Ascending aorta (tissue), 2 donors: ENCODE measurements at regions of chr19 and their contacts with region 1.

Region 1: DNA sequence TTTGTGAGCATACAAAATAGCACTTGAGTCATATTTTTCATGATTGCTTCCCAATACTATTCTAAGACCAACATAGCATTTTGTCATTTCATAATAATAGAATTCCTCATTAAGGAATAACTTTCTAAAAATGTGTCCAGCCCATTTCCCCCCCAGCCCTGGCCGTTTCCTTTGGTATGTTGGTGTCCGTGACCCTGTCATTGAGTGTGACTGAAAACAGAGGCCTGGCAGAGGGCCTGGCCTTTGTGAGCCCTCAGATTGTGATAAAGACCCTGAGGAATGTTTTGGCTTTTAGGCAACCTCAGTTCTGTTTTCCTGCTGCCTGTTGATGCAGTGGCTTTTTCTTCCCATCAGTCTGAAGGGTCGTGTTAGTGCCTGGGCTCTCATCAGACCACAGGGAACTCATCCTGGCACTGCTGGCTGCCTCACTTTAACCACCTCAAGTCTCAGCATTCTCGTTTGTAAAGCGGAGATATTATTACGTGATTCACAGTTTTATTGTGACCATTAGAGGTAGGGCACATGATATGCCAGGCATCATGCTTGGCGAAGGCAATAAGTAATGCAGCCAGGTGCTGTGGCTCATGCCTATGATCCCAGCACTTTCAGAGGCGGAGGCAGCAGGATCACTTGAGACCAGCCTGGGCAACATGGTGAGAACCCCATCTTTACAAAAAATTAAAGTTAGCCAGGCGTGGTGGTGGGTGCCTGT is 13.8 kb downstream of the SPINT2 start:
- DNase-seq: peak; percentile 33 to 95
- H3K4me3 ChIP-seq: peak overlapping the region in 1 of 2 donors; percentile 27
- H3K27ac ChIP-seq: peak overlapping the region; percentile 85 to 89
- H3K4me1 ChIP-seq: peaks cover 26 to 69% of the 10 kb centered on the region in 2 donors
- H3K27me3 ChIP-seq: no peaks in the 10 kb centered on the region
- CTCF ChIP-seq: no peak

Region 2: DNA sequence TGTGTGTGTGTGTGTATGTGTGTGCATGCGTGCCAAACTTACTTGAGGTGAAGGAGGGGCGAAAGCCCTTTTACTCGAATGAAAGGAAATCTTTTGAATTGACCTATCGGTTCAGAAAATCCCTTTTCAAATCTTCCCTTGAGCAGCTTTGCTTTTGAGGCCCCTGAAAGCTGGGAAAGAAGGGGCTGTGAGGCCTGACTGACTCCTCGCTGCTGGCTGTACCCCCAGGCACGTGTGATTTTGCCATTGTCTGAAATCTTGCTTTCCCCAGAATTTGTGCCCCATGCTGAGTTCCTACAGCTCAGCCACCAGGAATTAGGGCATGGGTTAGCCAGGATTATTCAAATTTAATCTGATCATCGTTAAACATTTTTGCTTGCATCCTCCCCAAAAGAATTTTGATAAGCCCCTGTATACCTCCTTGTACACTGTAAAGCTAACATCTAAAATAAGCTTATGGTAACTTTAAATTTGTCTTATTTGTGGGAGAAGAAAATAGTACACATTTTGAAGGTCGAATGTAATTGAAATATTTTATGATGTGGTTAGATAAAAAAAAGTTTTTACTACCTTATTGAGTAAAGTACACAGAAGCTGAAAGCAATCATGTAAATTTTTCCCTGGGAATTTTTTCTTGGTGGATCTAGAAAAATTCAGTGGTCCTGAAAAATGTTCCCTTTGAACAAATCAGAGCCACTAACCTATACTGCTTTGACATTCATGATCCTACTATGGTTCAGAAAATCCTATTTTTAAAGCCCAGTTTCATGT is 324.4 kb before region 1 on chr19:
- intact Hi-C with region 1: no loop called
- DNase-seq: peak in 1 of 2 donors; percentile 19
- H3K4me3 ChIP-seq: no peak overlapping the region
- H3K27ac ChIP-seq: no peak overlapping the region
- H3K4me1 ChIP-seq: no peaks in the 10 kb centered on the region
- H3K27me3 ChIP-seq: no peaks in the 10 kb centered on the region
- CTCF ChIP-seq: no peak

Region 3: DNA sequence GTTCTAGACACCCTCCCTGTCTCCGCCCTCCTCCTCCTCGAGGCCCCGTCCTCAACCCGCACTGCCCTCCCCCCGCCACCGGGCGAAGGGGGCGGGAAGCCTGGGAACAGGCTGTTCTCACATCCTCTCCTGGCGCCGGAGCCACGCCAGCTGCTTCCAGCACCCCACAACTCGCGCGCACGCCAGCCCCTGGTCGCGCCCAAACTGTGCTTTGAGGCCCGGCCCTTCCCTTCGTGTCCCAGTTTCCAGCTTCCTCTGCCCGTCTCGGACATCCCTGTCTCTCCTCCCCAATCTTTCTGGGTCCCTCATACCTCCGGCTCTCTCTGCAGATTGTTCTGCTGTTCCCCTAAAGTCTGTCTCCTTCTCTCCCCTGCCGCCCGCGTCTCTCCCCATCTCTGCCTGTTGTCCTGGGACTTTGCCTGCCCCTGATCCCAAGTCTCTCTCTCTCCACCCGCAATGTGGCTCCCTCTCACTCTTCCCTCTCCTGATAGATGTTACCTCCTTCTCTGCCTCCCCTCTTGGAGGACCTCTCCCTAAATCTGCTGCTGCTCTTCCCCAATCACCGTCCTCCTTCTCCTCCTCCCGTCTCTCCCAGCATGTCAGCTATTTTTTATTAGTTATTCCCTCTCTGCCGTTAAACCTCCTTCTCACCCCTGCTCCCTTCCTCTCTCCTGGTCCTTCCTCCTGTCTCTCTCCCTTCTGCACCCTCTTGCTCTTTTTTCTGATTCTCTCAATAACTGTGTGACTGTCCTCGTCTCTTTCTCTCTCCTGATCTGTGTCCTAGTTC is 68.3 kb before region 1 on chr19:
- intact Hi-C with region 1: no loop called
- DNase-seq: peak; percentile 69 to 82
- H3K4me3 ChIP-seq: peak overlapping the region; percentile 36 to 55
- H3K27ac ChIP-seq: peak overlapping the region; percentile 51 to 79
- H3K4me1 ChIP-seq: peaks cover 10 to 24% of the 10 kb centered on the region in 2 donors
- H3K27me3 ChIP-seq: no peaks in the 10 kb centered on the region
- CTCF ChIP-seq: no peak

Region 4: DNA sequence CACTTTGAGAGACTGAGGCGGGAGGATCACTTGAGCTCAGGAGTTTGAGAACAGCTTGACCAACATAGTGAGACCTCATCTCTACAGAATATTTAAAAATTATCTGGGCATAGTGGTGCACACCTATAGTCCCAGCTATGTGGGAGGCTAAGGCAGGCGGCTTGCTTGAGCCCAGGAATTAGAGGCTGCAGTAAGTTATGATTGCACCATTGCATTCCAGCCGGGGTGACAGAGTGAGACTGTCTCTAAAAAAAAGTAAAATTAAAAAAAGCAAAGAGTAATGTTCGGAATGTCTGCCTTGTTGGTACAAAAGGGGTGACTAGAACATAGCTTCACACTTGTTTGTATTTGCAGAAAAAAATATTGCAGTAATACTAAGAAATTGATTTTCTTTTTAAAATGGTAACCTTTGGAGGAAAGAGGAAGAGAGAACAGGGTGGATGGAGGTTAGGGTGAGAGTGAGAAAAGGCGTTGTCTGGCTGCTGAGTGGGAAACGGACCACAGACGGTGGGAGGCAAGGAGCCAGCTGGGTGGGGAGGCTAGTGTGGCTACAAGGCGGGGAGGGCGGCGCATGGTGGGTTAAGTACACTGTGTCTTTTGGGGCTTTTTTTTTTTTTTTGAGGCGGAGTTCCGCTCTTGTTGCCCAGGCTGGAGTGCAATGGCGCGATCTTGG is 32.2 kb before region 1 on chr19:
- intact Hi-C with region 1: loop called (anchors 1 kb)
- DNase-seq: peak in 1 of 2 donors; percentile 87
- H3K4me3 ChIP-seq: peak overlapping the region in 1 of 2 donors; percentile 6
- H3K27ac ChIP-seq: peak overlapping the region; percentile 90 to 99
- H3K4me1 ChIP-seq: peaks cover 18 to 63% of the 10 kb centered on the region in 2 donors
- H3K27me3 ChIP-seq: no peaks in the 10 kb centered on the region
- CTCF ChIP-seq: no peak

Region 5: GRCh38 chr19:38263689-38264485 is 14.2 kb before region 1 on chr19:
- intact Hi-C with region 1: loop called (anchors 1 kb)
- DNase-seq: peak; percentile 42 to 89
- H3K4me3 ChIP-seq: peak overlapping the region; percentile 65 to 76
- H3K27ac ChIP-seq: peak overlapping the region; percentile 98
- H3K4me1 ChIP-seq: peaks cover 7 to 33% of the 10 kb centered on the region in 2 donors
- H3K27me3 ChIP-seq: no peaks in the 10 kb centered on the region
- CTCF ChIP-seq: no peak

Region 6: GRCh38 chr19:38315657-38316476 is 37.7 kb after region 1 on chr19 and contains the start of gene YIF1B:
- intact Hi-C with region 1: loop called (anchors 1 kb)
- DNase-seq: peak; percentile 97 to 99
- H3K4me3 ChIP-seq: peak within 1 kb of the TSS; percentile 68 to 70
- H3K27ac ChIP-seq: peak within 1 kb of the TSS; percentile 79 to 85
- H3K4me1 ChIP-seq: peaks cover 7 to 25% of the 10 kb centered on the region in 2 donors
- H3K27me3 ChIP-seq: no peaks in the 10 kb centered on the region
- CTCF ChIP-seq: no peak
- total RNA-seq, gene YIF1B: 24.7 TPM